ENCODE measurements at regions of chr16 and their contacts with region 1.

Region 1: DNA sequence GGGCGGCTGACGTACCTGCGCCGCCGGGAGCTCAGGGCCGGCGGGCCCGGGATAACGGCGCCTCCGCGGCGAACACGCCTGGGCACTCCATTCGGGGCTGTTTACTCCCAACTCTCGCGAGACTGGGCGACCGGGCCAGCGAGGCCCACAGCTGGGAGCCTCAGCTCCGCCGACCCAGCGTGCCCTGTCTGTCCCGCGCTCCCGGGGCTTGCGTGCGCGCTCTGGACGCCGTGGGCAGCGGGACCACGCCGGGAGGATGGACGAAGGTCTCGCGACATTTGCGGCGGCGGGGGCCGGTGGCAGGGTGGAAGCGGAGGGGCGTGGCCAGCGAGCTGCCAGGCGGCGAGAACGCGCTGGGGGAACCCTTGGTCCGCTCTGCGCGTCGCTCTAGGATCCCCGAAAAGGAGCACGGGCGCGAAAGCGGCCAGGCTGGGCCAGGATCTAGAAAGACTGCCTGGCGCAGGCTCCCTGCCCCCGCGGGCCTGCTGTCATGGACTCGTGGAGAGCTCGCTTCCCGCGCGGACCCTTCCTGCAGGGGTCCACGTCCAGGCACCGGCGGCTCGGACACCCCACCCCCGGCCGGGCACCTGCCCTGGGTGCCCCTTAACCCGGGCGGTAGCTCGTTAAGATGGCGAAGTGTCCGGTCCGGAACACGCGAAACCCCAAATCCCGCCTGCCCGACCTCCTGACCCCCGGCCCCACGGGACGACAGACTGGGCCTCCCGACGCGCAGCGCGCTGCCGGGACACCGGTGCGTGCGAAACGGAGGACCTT is at the start of gene MBTPS1:
- DNase-seq: peak; percentile 98
- H3K4me3 Mint-ChIP-seq: peak within 1 kb of the TSS; percentile 89
- H3K27ac Mint-ChIP-seq: peak within 1 kb of the TSS; percentile 90
- H3K4me1 Mint-ChIP-seq: no peaks in the 10 kb centered on the region
- H3K27me3 Mint-ChIP-seq: no peaks in the 10 kb centered on the region
- CTCF ChIP-seq: no peak
- total RNA-seq, gene MBTPS1: 63.6 and 75.1 TPM in 2 replicates

Region 2: GRCh38 chr16:84103678-84104077 is 13.2 kb before region 1 on chr16:
- CTCF ChIA-PET with region 1: interaction called, 20 read pairs
- POLR2A ChIA-PET with region 1: interaction called, 120 read pairs
- intact Hi-C with region 1: no loop called
- DNase-seq: peak; percentile 65
- H3K4me3 Mint-ChIP-seq: no peak overlapping the region
- H3K27ac Mint-ChIP-seq: peak overlapping the region; percentile 7
- H3K4me1 Mint-ChIP-seq: peaks cover 17% of the 10 kb centered on the region
- H3K27me3 Mint-ChIP-seq: no peaks in the 10 kb centered on the region
- CTCF ChIP-seq: no peak

Region 3: DNA sequence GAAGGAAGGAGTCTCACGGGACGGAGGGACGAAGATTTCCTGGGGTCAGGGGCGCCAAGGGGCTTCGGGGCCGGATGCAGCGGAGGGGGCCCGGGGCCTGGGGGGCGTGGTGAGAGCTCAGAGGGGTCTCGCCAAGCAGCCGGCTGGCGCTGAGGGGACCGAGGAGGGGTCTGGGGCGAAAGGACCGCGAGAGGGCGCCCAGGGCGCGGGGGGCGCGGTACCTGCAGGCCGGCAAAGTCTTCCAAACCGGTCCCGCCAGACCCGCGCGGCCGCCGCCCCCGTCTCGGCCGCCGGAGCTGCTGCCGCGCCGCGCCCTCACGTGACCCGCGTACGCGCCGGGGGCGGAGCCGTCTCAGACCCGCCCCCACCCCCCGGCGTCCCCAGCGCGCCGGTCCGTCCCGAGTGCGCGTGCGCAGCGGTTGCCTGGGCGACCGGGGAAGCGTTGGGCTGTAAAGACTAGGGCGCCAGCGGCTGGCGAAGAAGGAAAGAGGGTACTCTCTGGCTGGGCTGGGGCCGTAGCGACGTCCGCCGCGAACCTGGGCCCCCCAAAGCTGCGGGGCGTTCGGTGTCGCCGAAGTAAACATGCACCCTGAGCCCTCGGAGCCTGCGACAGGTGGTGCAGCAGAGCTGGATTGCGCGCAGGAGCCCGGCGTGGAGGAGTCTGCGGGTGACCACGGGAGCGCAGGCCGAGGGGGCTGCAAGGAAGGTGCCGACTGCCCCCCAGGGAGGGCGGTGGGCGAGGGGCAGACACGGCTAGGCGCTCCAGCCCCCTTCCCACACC is 28.1 kb after region 1 on chr16 and contains the starts of genes DNAAF1 and HSDL1:
- CTCF ChIA-PET with region 1: interaction called, 7 read pairs
- POLR2A ChIA-PET with region 1: interaction called, 24 read pairs
- intact Hi-C with region 1: no loop called
- DNase-seq: peak; percentile 81
- H3K4me3 Mint-ChIP-seq: peak within 1 kb of the TSS; percentile 88
- H3K27ac Mint-ChIP-seq: peak within 1 kb of the TSS; percentile 76
- H3K4me1 Mint-ChIP-seq: peaks cover under 1% of the 10 kb centered on the region
- H3K27me3 Mint-ChIP-seq: no peaks in the 10 kb centered on the region
- CTCF ChIP-seq: no peak
- total RNA-seq, gene DNAAF1: not detected in 2 replicates
- total RNA-seq, gene HSDL1: 13.3 and 20.9 TPM in 2 replicates

Region 4: DNA sequence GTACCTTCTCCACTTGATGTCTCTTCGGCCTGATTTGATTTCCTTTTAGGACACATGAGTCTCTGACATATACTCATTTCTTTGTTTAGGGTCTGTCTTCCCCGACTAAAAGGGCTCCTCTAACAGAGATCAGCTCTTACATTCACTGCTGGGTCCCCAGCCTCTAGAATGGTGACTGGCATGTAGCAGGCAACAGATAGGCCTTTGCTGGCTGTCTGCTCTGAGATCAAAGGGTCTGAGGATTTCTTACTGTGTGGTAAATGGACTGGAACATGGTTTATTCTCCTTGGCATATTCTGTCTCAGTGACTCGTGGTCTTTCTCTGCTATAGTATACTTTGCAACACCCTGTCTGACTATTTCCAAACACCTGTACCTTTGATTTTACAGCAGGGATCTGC is 44.9 kb after region 1 on chr16:
- CTCF ChIA-PET with region 1: no interaction called
- POLR2A ChIA-PET with region 1: no interaction called
- intact Hi-C with region 1: no loop called
- DNase-seq: no peak
- H3K4me3 Mint-ChIP-seq: no peak overlapping the region
- H3K27ac Mint-ChIP-seq: no peak overlapping the region
- H3K4me1 Mint-ChIP-seq: no peaks in the 10 kb centered on the region
- H3K27me3 Mint-ChIP-seq: peaks cover 39% of the 10 kb centered on the region
- CTCF ChIP-seq: no peak

Region 5: GRCh38 chr16:84175350-84176081 is 58.6 kb after region 1 on chr16:
- CTCF ChIA-PET with region 1: interaction called, 4 read pairs
- POLR2A ChIA-PET with region 1: interaction called, 45 read pairs
- intact Hi-C with region 1: loop called (anchors 5 kb)
- DNase-seq: peak; percentile 67
- H3K4me3 Mint-ChIP-seq: no peak overlapping the region
- H3K27ac Mint-ChIP-seq: peak overlapping the region; percentile 41
- H3K4me1 Mint-ChIP-seq: peaks cover 6% of the 10 kb centered on the region
- H3K27me3 Mint-ChIP-seq: no peaks in the 10 kb centered on the region
- CTCF ChIP-seq: peak; percentile 62

Region 6: DNA sequence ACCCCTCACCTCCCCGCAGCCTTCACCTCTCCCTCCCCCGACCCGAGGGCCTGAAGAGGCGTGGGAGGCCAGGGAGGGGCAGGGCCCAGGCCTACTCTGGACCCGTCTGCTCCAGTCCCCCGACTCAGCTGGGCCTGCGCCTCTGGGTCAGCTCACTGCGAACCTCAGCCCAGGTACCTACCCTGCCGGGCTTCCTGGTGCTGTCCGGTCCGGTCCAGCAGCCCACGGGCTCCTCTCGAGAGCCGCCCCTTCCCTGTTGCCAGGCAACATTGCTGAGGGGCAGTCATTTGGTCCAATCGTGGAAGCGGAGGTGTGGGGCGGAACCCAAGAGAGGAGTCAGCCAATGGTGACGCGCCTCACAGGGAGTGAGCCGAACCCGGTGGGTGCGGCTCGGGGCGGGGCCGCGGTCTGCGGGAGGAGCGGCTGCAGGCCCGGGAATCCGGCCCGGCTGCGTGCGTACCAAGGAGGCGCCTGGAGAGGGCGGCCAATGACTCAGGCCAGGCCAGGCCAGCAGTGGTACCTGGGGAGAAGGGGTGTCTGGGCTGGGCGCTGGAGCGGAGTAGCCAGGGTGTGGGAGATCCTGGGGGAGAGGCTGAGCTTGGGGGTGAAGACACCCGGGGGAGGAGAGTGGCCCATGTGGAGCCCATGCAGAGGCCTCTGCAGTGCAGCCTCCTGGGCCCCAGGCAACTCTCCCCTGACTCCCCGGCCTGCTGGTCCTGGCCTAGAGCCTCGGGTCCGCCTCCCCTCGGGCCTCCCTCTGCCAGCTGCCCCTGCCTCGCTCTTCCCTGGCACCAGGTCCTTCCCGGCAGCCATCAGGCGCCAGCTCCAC is 387.7 kb after region 1 on chr16 and contains the start of gene MEAK7:
- CTCF ChIA-PET with region 1: interaction called, 3 read pairs
- POLR2A ChIA-PET with region 1: interaction called, 10 read pairs
- intact Hi-C with region 1: no loop called
- DNase-seq: peak; percentile 99
- H3K4me3 Mint-ChIP-seq: peak within 1 kb of the TSS; percentile 84
- H3K27ac Mint-ChIP-seq: peak within 1 kb of the TSS; percentile 88
- H3K4me1 Mint-ChIP-seq: peaks cover 52% of the 10 kb centered on the region
- H3K27me3 Mint-ChIP-seq: no peaks in the 10 kb centered on the region
- CTCF ChIP-seq: no peak
- total RNA-seq, gene MEAK7: 62.3 and 66.8 TPM in 2 replicates

Measured in MCF 10A (cell line).